ENCODE measurements at regions of chr1 and their contacts with region 1.

Region 1: DNA sequence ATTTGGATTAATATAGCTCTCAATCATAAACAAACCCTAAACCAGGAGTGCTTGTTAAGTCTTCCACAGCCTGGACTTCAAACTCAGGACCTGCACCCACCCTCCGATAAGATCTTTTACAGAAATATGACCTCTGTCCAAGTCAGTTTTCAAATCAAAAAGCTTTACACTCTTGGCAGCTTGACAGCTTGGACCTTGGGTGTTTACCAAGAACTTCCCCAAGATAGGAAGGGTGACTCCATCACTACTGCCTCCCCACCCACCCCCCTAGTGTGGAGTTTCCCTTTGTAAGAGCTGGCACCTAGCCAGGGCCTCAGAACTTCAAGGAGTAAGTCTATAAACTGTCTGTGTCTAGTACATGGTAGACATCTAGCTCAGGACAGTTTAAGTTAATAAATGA is 9.6 kb downstream of the BCAR3 start:
- DNase-seq: peak in 1 of 2 experiments; percentile 48
- H3K4me3 ChIP-seq: no peak overlapping the region
- H3K4me3 Mint-ChIP-seq: no peak overlapping the region
- H3K27ac Mint-ChIP-seq: no peak overlapping the region
- H3K4me1 ChIP-seq: peaks cover 41% of the 10 kb centered on the region
- H3K4me1 Mint-ChIP-seq: peaks cover 15% of the 10 kb centered on the region
- H3K27me3 ChIP-seq: no peaks in the 10 kb centered on the region
- H3K27me3 Mint-ChIP-seq: no peaks in the 10 kb centered on the region
- CTCF ChIP-seq: no peak

Region 2: GRCh38 chr1:93567255-93567918 is 104.7 kb before region 1 on chr1:
- CTCF ChIA-PET with region 1: no interaction called
- POLR2A ChIA-PET with region 1: no interaction called
- intact Hi-C with region 1: no loop called
- DNase-seq: peak; percentile 24 to 53
- H3K4me3 ChIP-seq: no peak overlapping the region
- H3K4me3 Mint-ChIP-seq: no peak overlapping the region
- H3K27ac Mint-ChIP-seq: peak overlapping the region; percentile 67
- H3K4me1 ChIP-seq: peaks cover 9% of the 10 kb centered on the region
- H3K4me1 Mint-ChIP-seq: peaks cover 10% of the 10 kb centered on the region
- H3K27me3 ChIP-seq: no peaks in the 10 kb centered on the region
- H3K27me3 Mint-ChIP-seq: no peaks in the 10 kb centered on the region
- CTCF ChIP-seq: no peak

Region 3: DNA sequence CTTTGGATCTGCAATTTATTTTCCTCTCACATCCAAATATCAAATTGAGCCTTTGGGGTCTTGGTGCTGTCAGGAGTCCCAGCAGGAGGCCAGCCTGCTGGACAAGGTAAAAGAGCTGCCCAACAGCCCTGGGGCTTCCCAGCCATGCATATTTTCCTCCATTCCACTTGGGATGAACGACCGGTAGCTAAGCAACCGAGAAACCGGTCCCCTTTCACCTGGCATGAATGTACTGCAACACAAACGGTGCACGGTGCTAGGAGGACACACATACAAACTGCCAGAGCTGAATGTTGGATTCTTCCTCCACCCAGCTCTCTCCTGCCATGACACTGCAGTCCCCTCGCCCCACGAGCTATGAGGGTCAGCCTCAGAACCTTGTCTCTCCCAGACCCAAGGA is 33.1 kb before region 1 on chr1:
- CTCF ChIA-PET with region 1: no interaction called
- POLR2A ChIA-PET with region 1: no interaction called
- intact Hi-C with region 1: loop called (anchors 2 kb)
- DNase-seq: peak; percentile 38 to 52
- H3K4me3 ChIP-seq: no peak overlapping the region
- H3K4me3 Mint-ChIP-seq: peak overlapping the region; percentile 43
- H3K27ac Mint-ChIP-seq: peak overlapping the region; percentile 93
- H3K4me1 ChIP-seq: peaks cover 17% of the 10 kb centered on the region
- H3K4me1 Mint-ChIP-seq: peaks cover 6% of the 10 kb centered on the region
- H3K27me3 ChIP-seq: no peaks in the 10 kb centered on the region
- H3K27me3 Mint-ChIP-seq: no peaks in the 10 kb centered on the region
- CTCF ChIP-seq: no peak

Region 4: DNA sequence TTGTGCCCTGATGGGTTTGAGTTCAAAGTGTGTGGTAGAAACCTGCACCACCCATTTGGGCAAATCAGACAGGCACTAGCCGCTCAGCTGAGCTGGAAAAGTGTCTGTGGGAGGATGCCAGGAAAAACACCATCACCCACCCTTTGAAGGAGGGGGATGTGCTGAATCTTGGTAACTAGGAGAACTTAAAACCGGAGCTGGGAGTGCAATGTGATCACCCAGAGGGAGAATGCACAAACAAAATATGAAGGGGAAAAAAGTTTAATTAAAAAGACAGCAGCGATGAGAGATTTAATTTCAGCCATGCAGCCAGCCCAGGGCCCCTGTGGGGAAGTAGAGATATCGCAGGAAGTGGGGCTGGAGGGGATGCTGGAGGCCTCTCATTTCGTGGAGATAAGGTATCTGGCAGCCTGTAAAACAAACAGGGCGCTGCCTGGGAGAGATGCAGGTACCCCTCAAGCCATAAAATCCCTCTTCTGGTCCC is 96.4 kb after region 1 on chr1:
- CTCF ChIA-PET with region 1: no interaction called
- POLR2A ChIA-PET with region 1: no interaction called
- intact Hi-C with region 1: loop called (anchors 10 kb)
- DNase-seq: no peak
- H3K4me3 ChIP-seq: no peak overlapping the region
- H3K4me3 Mint-ChIP-seq: peak overlapping the region; percentile 50
- H3K27ac Mint-ChIP-seq: no peak overlapping the region
- H3K4me1 ChIP-seq: peaks cover 21% of the 10 kb centered on the region
- H3K4me1 Mint-ChIP-seq: peaks cover 16% of the 10 kb centered on the region
- H3K27me3 ChIP-seq: no peaks in the 10 kb centered on the region
- H3K27me3 Mint-ChIP-seq: no peaks in the 10 kb centered on the region
- CTCF ChIP-seq: no peak

Region 5: DNA sequence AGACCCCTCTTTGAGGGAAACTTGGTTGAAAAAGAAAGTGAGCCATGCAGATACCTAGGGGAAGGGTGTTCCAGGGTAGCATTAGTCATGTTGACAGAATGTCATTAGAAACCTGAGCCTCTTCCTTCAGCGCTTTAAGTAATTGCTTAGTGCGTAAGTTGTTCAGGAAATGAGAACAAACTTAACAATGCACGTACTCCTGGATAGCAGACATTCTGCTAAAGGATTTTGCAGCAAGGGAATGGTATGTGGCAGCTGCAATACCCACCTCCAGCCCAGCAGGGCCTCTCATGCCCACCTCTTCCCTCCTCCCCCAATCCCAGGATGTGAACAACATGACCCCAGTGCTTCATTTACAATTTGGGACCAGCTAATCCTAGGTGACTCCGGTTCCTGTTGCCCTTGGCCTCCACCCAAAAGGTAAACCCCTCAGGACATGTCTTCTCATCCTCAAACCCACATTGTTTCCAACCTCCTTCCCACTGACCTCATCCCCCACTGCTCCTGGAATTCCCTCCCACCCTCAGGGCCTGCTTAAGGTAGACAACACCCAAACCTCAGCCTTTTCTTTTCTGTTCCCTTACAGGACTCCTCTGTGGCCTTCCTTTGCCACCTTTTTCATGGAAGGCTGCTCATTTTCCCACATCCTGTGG is 107.6 kb after region 1 on chr1:
- CTCF ChIA-PET with region 1: no interaction called
- POLR2A ChIA-PET with region 1: no interaction called
- intact Hi-C with region 1: no loop called
- DNase-seq: no peak
- H3K4me3 ChIP-seq: no peak overlapping the region
- H3K4me3 Mint-ChIP-seq: no peak overlapping the region
- H3K27ac Mint-ChIP-seq: no peak overlapping the region
- H3K4me1 ChIP-seq: no peaks in the 10 kb centered on the region
- H3K4me1 Mint-ChIP-seq: no peaks in the 10 kb centered on the region
- H3K27me3 ChIP-seq: no peaks in the 10 kb centered on the region
- H3K27me3 Mint-ChIP-seq: no peaks in the 10 kb centered on the region
- CTCF ChIP-seq: no peak

Measured in Caco-2 (cell line).